ENCODE measurements at regions of chr13 and their contacts with region 1.

Region 1: GRCh38 chr13:29454911-29455481 is 140.5 kb downstream of the SLC7A1 start:
- DNase-seq: peak; percentile 47
- CTCF ChIP-seq: peak; percentile 23

Region 2: DNA sequence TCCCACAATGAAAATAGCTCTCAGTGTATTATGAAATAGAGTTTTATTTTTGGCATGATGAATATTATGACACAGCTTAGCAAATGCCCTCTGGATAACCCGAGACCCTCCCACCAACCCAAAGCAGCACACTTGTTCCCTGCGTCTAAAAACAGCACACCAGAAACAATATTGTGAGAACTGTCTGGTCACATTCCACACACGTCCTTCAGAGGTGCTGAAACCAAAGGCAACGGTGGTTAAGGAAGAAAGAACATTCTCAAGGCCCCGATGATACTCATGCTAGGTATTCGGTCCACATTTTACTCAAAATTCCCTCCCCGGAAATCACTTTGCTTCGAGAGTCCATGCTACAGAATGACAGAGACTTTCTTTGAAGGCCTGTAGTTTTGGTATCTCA is 16.2 kb before region 1 on chr13:
- CTCF ChIA-PET with region 1: interaction called, 17 read pairs
- POLR2A ChIA-PET with region 1: no interaction called
- DNase-seq: no peak
- CTCF ChIP-seq: no peak

Region 3: GRCh38 chr13:29472332-29472961 is 17.5 kb after region 1 on chr13:
- CTCF ChIA-PET with region 1: interaction called, 24 read pairs
- POLR2A ChIA-PET with region 1: no interaction called
- DNase-seq: peak; percentile 61
- CTCF ChIP-seq: peak; percentile 94